Prostate gland (tissue), 2 donors: ENCODE measurements at regions of chr17 and their contacts with region 1.

Region 1: GRCh38 chr17:57987580-57988421 is at the start of gene VEZF1:
- DNase-seq: peak; percentile 65
- H3K4me3 ChIP-seq: peak within 1 kb of the TSS; percentile 80
- H3K27ac ChIP-seq: peak within 1 kb of the TSS; percentile 93 to 96
- H3K4me1 ChIP-seq: peaks cover 4% of the 10 kb centered on the region
- H3K27me3 ChIP-seq: no peaks in the 10 kb centered on the region
- CTCF ChIP-seq: no peak
- POLR2A ChIP-seq: peak; percentile 42
- total RNA-seq, gene VEZF1: 84.9 to 91.1 TPM

Region 2: DNA sequence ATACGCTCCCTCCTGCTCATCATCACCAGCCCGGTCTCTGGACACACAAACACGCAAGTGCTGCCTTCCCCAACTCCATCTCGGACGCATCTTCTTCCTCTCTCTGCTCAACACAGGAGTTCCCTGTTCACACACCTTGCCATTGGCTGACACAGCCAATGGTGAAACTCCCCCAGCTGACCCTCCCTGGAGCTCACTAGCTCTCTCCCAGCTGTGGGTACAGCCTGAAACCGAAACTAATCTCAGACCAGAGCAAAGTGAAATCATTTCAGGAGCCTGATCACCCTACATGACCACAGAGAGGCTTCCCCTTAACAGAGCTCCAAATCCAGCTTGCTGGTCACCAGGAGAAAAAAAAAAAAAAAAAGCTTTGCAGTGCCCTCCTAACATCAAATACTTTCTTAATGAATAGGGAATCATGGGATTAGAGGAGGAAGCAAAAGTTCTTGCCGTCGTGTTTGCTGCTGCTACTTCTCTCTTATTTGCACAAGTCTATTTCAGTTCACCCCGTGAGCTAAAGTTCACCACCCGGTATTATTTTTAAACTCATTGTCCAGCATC is 40.9 kb before region 1 on chr17:
- intact Hi-C with region 1: loop called (anchors 2 kb)
- DNase-seq: peak; percentile 52
- H3K4me3 ChIP-seq: peak overlapping the region; percentile 20 to 33
- H3K27ac ChIP-seq: peak overlapping the region; percentile 85 to 87
- H3K4me1 ChIP-seq: peaks cover 15% of the 10 kb centered on the region
- H3K27me3 ChIP-seq: no peaks in the 10 kb centered on the region
- CTCF ChIP-seq: no peak
- POLR2A ChIP-seq: no peak

Region 3: GRCh38 chr17:58006924-58007780 is 19.4 kb after region 1 on chr17 and contains the start of gene SRSF1:
- intact Hi-C with region 1: no loop called
- DNase-seq: peak; percentile 96
- H3K4me3 ChIP-seq: peak within 1 kb of the TSS; percentile 82 to 98
- H3K27ac ChIP-seq: peak within 1 kb of the TSS; percentile 99
- H3K4me1 ChIP-seq: peaks cover 24% of the 10 kb centered on the region
- H3K27me3 ChIP-seq: no peaks in the 10 kb centered on the region
- CTCF ChIP-seq: peak in 1 of 4 experiments; percentile 21
- POLR2A ChIP-seq: peak; percentile 92
- total RNA-seq, gene SRSF1: 136 to 151 TPM